PC-9 (cell line): ENCODE measurements at regions of chr7 and their contacts with region 1.

Region 1: DNA sequence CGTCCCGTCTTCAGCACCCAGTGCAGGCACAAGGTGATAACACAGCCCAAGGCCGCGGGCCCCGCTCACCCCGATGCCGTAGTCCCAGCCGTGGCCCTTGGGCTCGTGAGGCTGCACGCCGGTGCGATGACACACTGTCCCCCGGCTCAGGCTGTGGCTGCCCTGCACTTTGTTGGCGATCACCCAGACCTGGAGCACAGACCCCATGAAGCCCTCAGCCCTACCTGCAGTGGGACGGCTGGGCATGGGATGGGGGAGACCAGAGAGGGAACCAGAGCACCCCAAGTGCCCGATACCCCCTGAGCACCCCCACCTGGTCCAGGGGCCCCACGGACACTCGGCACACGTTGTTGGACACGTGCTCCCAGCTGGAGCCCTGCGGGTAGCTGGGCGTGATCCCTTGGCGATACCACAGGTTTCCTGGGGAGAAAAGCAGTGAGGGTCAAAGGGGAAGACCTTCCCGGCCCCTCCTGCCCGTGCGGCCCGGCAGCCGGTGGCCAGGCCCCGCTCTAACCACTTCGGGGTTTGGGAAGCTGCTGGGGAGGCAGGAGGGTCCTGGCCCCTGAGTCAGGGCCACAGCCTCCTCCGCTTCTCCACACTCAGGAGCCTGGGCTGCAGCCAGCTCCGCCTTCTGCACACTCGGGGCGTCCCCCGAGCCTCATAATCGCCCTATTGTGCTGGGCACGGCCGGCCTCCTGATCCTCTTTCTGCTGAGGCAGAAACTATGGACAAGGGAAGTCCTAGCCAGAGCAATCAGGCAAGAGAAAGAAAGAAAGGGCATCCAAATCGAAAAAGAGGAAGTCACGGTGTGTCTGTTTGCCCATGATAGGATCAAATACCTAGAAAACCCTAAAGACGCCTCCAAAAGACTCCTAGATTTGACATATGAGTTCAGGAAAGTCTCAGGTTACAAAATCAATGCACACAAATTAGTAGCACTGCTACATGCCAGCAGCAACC is 6.7 kb downstream of the BHLHA15 start:
- DNase-seq: no peak
- H3K4me3 ChIP-seq: no peak overlapping the region
- H3K27ac ChIP-seq: no peak overlapping the region
- H3K4me1 ChIP-seq: no peaks in the 10 kb centered on the region
- H3K27me3 ChIP-seq: no peaks in the 10 kb centered on the region
- CTCF ChIP-seq: no peak

Region 2: GRCh38 chr7:98199131-98199530 is 18.8 kb before region 1 on chr7:
- CTCF ChIA-PET with region 1: no interaction called
- POLR2A ChIA-PET with region 1: interaction called, 10 read pairs
- intact Hi-C with region 1: no loop called
- DNase-seq: no peak
- H3K4me3 ChIP-seq: no peak overlapping the region
- H3K27ac ChIP-seq: no peak overlapping the region
- H3K4me1 ChIP-seq: no peaks in the 10 kb centered on the region
- H3K27me3 ChIP-seq: no peaks in the 10 kb centered on the region
- CTCF ChIP-seq: no peak